ENCODE measurements at regions of chr18 and their contacts with region 1.

Region 1: DNA sequence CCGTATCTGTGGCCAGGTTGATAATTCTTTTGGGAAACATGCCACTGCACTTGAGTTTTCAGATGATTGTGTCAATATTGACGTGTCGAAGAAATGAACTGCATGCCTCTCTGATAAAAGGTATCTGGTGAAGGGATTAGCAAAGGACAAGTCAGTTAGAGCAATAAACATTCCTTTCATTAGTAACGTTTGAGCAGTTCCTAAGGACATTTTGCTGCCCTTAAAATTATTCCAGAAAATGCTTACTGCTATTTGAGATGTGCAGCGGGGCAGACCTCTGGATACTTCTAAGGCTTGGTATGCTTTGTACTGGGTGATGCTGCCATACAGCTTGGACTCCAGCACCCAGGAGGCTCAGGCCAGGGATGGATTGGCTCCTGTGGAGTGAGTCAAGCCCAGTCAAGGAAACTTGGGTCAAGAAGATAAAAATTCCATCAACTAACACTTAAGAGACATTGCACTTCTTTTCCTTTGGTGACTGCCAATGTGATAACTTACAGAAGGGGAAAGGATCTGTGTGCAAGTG is 166.7 kb downstream of the FHOD3 start:
- DNase-seq: peak in 2 of 5 donors; percentile 69 to 70
- ATAC-seq: peak; percentile 20 to 74 (median 55)
- H3K4me3 ChIP-seq: no peak overlapping the region
- H3K27ac ChIP-seq: peak overlapping the region; percentile 30 to 97 (median 83)
- H3K4me1 ChIP-seq: peaks cover 0 to 60% (median 29%) of the 10 kb centered on the region in 12 donors
- H3K27me3 ChIP-seq: no peaks in the 10 kb centered on the region
- CTCF ChIP-seq: no peak
- POLR2A ChIP-seq: no peak

Region 2: DNA sequence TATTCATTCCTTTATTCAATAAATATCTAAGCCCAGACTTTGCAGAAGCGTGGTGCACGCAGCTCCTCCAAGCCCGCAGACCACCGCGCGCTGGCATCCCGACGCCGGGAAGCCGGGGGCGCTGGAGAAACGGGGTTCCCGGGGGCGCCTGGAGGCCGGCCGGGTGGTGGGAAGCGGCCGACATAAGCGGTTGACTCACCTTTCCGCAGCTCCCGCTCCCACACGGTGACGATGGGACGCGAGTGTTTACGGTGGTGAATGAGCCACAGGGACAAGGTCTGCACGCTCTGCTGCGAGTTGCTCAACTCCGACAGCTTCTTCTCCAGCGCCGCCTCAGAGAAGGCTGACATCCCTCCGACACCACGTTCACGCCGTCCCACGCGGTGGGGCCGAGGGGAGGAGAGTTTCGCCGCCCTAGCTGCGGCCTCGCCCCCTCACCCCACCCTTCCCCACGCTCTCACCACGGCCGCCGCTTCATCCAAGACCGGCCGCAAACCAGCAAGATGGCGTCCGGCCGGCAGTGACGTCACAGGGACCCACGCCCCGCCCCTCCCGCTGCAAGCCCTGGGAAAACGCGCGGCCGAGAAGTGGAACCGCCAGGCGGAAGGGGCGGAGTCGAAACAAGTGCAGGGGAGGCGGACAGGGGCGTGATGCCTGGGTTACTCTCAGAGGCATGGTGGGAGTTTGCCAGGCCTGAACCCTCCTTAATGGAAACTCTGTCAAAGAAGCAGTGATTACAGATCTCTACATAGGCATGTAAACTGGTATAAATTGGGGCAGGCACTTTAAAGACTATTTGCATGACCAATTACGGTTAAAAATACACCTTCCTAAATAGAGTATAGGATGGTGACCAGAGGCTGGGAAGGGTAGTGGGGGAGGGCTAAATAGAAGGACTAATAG is 396.9 kb before region 1 on chr18 and contains the start of gene RPRD1A:
- intact Hi-C with region 1: no loop called
- DNase-seq: peak; percentile 97 to 99 (median 98)
- ATAC-seq: peak; percentile 97 to 99 (median 97)
- H3K4me3 ChIP-seq: peak within 1 kb of the TSS; percentile 71 to 99 (median 82)
- H3K27ac ChIP-seq: peak within 1 kb of the TSS; percentile 59 to 94 (median 90)
- H3K4me1 ChIP-seq: peaks cover 3 to 25% (median 14%) of the 10 kb centered on the region in 12 donors
- H3K27me3 ChIP-seq: peaks cover 0 to 4% (median 0%) of the 10 kb centered on the region in 9 donors
- CTCF ChIP-seq: peak in 2 of 12 donors; percentile 7 to 10
- POLR2A ChIP-seq: peak in 1 of 2 donors; percentile 54
- total RNA-seq, gene RPRD1A: 38.5 to 59.8 (median 45.3) TPM

Region 3: GRCh38 chr18:36296650-36297416 is 167.4 kb before region 1 on chr18:
- intact Hi-C with region 1: loop called in 4 of 10 experiments (anchors 5 to 10 kb)
- DNase-seq: peak; percentile 69 to 76 (median 72)
- ATAC-seq: peak; percentile 41 to 72 (median 52)
- H3K4me3 ChIP-seq: peak overlapping the region; percentile 36 to 92 (median 75)
- H3K27ac ChIP-seq: peak overlapping the region in 11 of 12 donors; percentile 64 to 94 (median 89)
- H3K4me1 ChIP-seq: peaks cover 0 to 33% (median 11%) of the 10 kb centered on the region in 12 donors
- H3K27me3 ChIP-seq: peaks cover 0 to 59% (median 9%) of the 10 kb centered on the region in 9 donors
- CTCF ChIP-seq: peak in 7 of 12 donors; percentile 31 to 61 (median 51)
- POLR2A ChIP-seq: no peak

Region 4: DNA sequence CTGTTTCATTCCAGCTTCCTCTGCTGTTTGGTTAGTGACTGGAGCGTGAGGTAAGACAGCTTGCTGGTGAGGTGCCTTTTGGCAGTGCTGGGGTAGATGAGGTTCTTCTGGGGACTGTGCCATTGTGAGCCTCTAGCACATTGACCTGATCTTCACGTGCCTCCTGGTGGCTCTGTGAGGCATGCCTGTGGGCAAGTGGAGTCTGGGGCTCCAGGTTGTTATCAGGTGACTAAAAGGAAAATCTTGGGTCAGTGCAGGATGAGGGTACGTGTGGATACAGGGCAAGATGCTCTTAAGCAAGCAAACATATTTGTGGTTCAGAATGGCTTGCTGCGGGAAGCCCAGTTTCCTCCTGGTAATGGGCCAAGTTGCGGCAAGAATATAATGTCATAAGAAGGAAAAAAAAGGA is 91.3 kb before region 1 on chr18:
- intact Hi-C with region 1: loop called in 1 of 10 experiments (anchors 10 kb)
- DNase-seq: peak in 1 of 5 donors; percentile 34
- ATAC-seq: peak in 3 of 4 donors; percentile 37 to 74 (median 56)
- H3K4me3 ChIP-seq: no peak overlapping the region
- H3K27ac ChIP-seq: peak overlapping the region in 7 of 12 donors; percentile 4 to 68 (median 27)
- H3K4me1 ChIP-seq: peaks cover 0 to 71% (median 11%) of the 10 kb centered on the region in 12 donors
- H3K27me3 ChIP-seq: peaks cover 0 to 2% (median 0%) of the 10 kb centered on the region in 9 donors
- CTCF ChIP-seq: peak in 3 of 12 donors; percentile 11 to 23 (median 12)
- POLR2A ChIP-seq: no peak

Region 5: GRCh38 chr18:36402765-36403396 is 61.3 kb before region 1 on chr18:
- intact Hi-C with region 1: loop called in 3 of 10 experiments (anchors 10 kb)
- DNase-seq: peak; percentile 64 to 89 (median 80)
- ATAC-seq: peak; percentile 63 to 81 (median 78)
- H3K4me3 ChIP-seq: no peak overlapping the region
- H3K27ac ChIP-seq: peak overlapping the region; percentile 42 to 94 (median 78)
- H3K4me1 ChIP-seq: peaks cover 0 to 75% (median 15%) of the 10 kb centered on the region in 12 donors
- H3K27me3 ChIP-seq: no peaks in the 10 kb centered on the region
- CTCF ChIP-seq: peak in 4 of 12 donors; percentile 8 to 30 (median 18)
- POLR2A ChIP-seq: no peak

Region 6: GRCh38 chr18:36572135-36572856 is 108.1 kb after region 1 on chr18:
- intact Hi-C with region 1: loop called in 4 of 10 experiments (anchors 2 to 10 kb)
- DNase-seq: peak in 1 of 5 donors; percentile 39
- ATAC-seq: peak; percentile 53 to 77 (median 69)
- H3K4me3 ChIP-seq: no peak overlapping the region
- H3K27ac ChIP-seq: peak overlapping the region in 6 of 12 donors; percentile 6 to 45 (median 24)
- H3K4me1 ChIP-seq: peaks cover 0 to 17% (median 0%) of the 10 kb centered on the region in 12 donors
- H3K27me3 ChIP-seq: peaks cover 0 to 2% (median 0%) of the 10 kb centered on the region in 9 donors
- CTCF ChIP-seq: peak; percentile 11 to 67 (median 51)
- POLR2A ChIP-seq: no peak

Region 7: DNA sequence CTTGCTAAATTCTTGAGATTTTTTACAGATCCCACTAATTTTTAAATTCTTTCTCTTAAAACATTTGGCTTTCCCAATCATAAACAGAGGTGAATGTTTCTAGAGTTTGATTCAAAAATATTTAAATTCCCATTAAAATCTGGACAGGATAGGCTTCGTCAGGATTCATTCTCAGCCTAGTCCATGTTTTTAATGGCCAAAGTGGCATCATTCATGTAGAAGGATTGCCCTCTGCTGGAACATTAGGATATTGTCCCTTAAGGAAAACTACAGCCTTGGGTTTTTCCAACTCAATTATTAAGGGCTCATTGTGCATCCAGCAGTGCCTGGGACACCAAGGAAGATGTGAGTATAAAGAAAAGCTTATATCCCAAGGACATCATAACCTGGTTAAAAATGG is 292.9 kb after region 1 on chr18:
- intact Hi-C with region 1: loop called in 1 of 10 experiments (anchors 10 kb)
- DNase-seq: no peak
- ATAC-seq: peak in 2 of 4 donors; percentile 46 to 51
- H3K4me3 ChIP-seq: no peak overlapping the region
- H3K27ac ChIP-seq: no peak overlapping the region
- H3K4me1 ChIP-seq: peaks cover 0 to 23% (median 8%) of the 10 kb centered on the region in 12 donors
- H3K27me3 ChIP-seq: no peaks in the 10 kb centered on the region
- CTCF ChIP-seq: peak; percentile 40 to 70 (median 55)
- POLR2A ChIP-seq: no peak